Caco-2 (cell line): ENCODE measurements at regions of chr18 and their contacts with region 1.

Region 1: GRCh38 chr18:7645756-7646155 is 78.6 kb downstream of the PTPRM start:
- DNase-seq: no peak
- H3K4me3 ChIP-seq: no peak overlapping the region
- H3K4me3 Mint-ChIP-seq: peak overlapping the region; percentile 58
- H3K27ac Mint-ChIP-seq: peak overlapping the region; percentile 72
- H3K4me1 ChIP-seq: peaks cover 79% of the 10 kb centered on the region
- H3K4me1 Mint-ChIP-seq: peaks cover 41% of the 10 kb centered on the region
- H3K27me3 ChIP-seq: no peaks in the 10 kb centered on the region
- H3K27me3 Mint-ChIP-seq: no peaks in the 10 kb centered on the region
- CTCF ChIP-seq: no peak

Region 2: GRCh38 chr18:7221424-7222155 is 424.2 kb before region 1 on chr18:
- CTCF ChIA-PET with region 1: no interaction called
- POLR2A ChIA-PET with region 1: no interaction called
- intact Hi-C with region 1: no loop called
- DNase-seq: peak; percentile 75 to 77
- H3K4me3 ChIP-seq: no peak overlapping the region
- H3K4me3 Mint-ChIP-seq: no peak overlapping the region
- H3K27ac Mint-ChIP-seq: no peak overlapping the region
- H3K4me1 ChIP-seq: no peaks in the 10 kb centered on the region
- H3K4me1 Mint-ChIP-seq: no peaks in the 10 kb centered on the region
- H3K27me3 ChIP-seq: no peaks in the 10 kb centered on the region
- H3K27me3 Mint-ChIP-seq: peaks cover 6% of the 10 kb centered on the region
- CTCF ChIP-seq: peak; percentile 65 to 84

Region 3: DNA sequence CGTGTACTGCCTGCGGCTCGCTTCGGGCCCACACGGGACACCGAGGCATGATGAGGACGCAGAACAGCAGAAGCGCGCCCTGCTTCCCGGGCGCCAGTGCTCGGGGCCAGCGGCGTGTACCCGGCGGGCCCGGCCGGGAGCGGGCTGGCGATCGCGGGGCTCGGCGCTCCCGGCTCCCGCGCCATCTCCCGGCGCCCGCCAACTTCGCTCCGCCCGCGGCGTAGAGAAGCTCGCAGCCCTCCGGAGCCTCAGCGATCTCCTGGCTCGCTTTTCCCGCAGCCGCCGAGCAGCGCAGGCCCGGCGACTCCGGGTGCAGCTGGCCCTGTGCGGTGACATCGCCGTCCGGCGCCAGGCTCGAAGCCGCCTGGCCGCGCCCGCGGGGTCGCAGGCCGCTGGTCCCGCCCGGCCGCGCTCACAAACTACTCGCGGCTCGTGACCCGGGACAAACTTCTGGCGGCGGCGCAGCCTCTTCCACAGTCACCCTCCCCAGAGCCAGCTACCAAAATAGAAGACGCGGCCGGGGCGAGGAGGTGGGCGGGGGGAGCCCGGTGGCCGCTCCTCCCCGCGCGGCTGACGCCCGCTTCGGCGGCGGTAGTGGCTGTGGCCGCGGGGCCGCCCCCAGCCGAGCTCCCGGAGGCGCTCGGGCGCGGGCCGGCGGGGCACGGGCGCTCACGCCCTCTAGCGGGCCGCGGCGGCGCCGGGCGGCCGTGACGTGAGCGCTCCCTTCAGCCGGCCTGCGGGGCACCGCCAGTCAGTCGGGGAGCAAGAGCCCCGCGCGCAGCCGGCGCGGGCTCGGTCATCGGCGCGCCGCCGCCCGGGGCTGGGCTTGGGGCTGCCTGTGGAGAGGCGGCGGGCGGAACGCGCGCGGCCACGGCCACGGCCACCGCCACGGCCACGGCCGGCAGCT is 78.9 kb before region 1 on chr18 and contains the start of gene PTPRM:
- CTCF ChIA-PET with region 1: interaction called, 3 read pairs
- POLR2A ChIA-PET with region 1: interaction called, 6 read pairs
- intact Hi-C with region 1: loop called (anchors 2 kb)
- DNase-seq: peak; percentile 72 to 89
- H3K4me3 ChIP-seq: peak within 1 kb of the TSS; percentile 93
- H3K4me3 Mint-ChIP-seq: peak within 1 kb of the TSS; percentile 83
- H3K27ac Mint-ChIP-seq: peak within 1 kb of the TSS; percentile 72
- H3K4me1 ChIP-seq: peaks cover 17% of the 10 kb centered on the region
- H3K4me1 Mint-ChIP-seq: peaks cover 16% of the 10 kb centered on the region
- H3K27me3 ChIP-seq: no peaks in the 10 kb centered on the region
- H3K27me3 Mint-ChIP-seq: no peaks in the 10 kb centered on the region
- CTCF ChIP-seq: peak in 1 of 2 experiments; percentile 9
- total RNA-seq, gene PTPRM: 100.0 and 112 TPM in 2 replicates

Region 4: GRCh38 chr18:7676253-7676873 is 30.6 kb after region 1 on chr18:
- CTCF ChIA-PET with region 1: no interaction called
- POLR2A ChIA-PET with region 1: no interaction called
- intact Hi-C with region 1: no loop called
- DNase-seq: no peak
- H3K4me3 ChIP-seq: no peak overlapping the region
- H3K4me3 Mint-ChIP-seq: no peak overlapping the region
- H3K27ac Mint-ChIP-seq: peak overlapping the region; percentile 23
- H3K4me1 ChIP-seq: 0 out of 2 replicates have a peak, but pooled peaks cover 9% of the 10 kb centered on the region
- H3K4me1 Mint-ChIP-seq: peaks cover 9% of the 10 kb centered on the region
- H3K27me3 ChIP-seq: no peaks in the 10 kb centered on the region
- H3K27me3 Mint-ChIP-seq: no peaks in the 10 kb centered on the region
- CTCF ChIP-seq: no peak

Region 5: GRCh38 chr18:7735194-7735593 is 89.4 kb after region 1 on chr18:
- CTCF ChIA-PET with region 1: interaction called, 4 read pairs
- POLR2A ChIA-PET with region 1: no interaction called
- intact Hi-C with region 1: loop called (anchors 1 kb)
- DNase-seq: peak in 1 of 2 experiments; percentile 33
- H3K4me3 ChIP-seq: no peak overlapping the region
- H3K4me3 Mint-ChIP-seq: peak overlapping the region; percentile 51
- H3K27ac Mint-ChIP-seq: peak overlapping the region; percentile 78
- H3K4me1 ChIP-seq: peaks cover 76% of the 10 kb centered on the region
- H3K4me1 Mint-ChIP-seq: peaks cover 40% of the 10 kb centered on the region
- H3K27me3 ChIP-seq: no peaks in the 10 kb centered on the region
- H3K27me3 Mint-ChIP-seq: no peaks in the 10 kb centered on the region
- CTCF ChIP-seq: peak; percentile 49 to 55

Region 6: DNA sequence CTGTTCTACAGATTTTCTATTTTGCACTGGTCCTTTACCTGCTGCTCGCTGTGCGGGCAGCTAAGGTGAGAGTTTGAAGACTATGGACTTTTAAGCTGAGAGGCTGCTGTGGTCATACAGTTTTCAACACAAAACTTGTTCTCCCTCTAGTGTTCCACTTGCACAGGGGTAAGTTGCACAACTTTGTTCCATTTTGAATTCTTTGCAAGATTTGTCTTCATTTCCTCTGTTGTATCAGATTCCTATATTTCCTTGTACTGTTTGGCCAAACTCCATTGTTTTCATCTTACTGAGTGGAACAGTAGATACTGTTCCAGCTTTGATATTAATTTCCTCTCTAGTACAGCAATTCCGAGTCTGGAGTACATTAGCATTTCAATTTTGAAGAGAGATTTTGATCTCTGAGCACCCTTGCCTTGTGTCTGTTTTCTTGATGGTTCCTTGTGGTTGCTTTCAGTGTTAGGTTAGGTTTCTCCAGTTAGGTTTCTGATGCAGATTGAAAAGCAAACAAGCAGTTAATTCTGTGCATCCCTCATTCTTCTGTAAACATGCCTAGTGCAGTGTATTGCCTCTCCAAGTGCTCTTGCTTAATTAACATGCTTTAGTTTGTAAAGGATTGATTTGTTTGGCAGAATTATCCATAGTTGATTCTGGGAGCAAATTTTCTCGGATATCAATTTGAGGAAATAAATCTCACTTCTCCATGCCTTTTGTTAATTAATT is 110.2 kb after region 1 on chr18:
- CTCF ChIA-PET with region 1: interaction called, 4 read pairs
- POLR2A ChIA-PET with region 1: interaction called, 5 read pairs
- intact Hi-C with region 1: loop called (anchors 1 kb)
- DNase-seq: peak in 1 of 2 experiments; percentile 48
- H3K4me3 ChIP-seq: peak overlapping the region; percentile 11
- H3K4me3 Mint-ChIP-seq: peak overlapping the region; percentile 84
- H3K27ac Mint-ChIP-seq: peak overlapping the region; percentile 93
- H3K4me1 ChIP-seq: peaks cover 96% of the 10 kb centered on the region
- H3K4me1 Mint-ChIP-seq: peaks cover 74% of the 10 kb centered on the region
- H3K27me3 ChIP-seq: no peaks in the 10 kb centered on the region
- H3K27me3 Mint-ChIP-seq: no peaks in the 10 kb centered on the region
- CTCF ChIP-seq: peak in 1 of 2 experiments; percentile 56

Region 7: GRCh38 chr18:8011905-8012304 is 366.1 kb after region 1 on chr18:
- CTCF ChIA-PET with region 1: no interaction called
- POLR2A ChIA-PET with region 1: no interaction called
- intact Hi-C with region 1: no loop called
- DNase-seq: peak in 1 of 2 experiments; percentile 17
- H3K4me3 ChIP-seq: no peak overlapping the region
- H3K4me3 Mint-ChIP-seq: no peak overlapping the region
- H3K27ac Mint-ChIP-seq: no peak overlapping the region
- H3K4me1 ChIP-seq: peaks cover under 1% of the 10 kb centered on the region; the same call in 1 of the 2 replicates
- H3K4me1 Mint-ChIP-seq: no peaks in the 10 kb centered on the region
- H3K27me3 ChIP-seq: no peaks in the 10 kb centered on the region
- H3K27me3 Mint-ChIP-seq: no peaks in the 10 kb centered on the region
- CTCF ChIP-seq: peak in 1 of 2 experiments; percentile 8

Region 8: DNA sequence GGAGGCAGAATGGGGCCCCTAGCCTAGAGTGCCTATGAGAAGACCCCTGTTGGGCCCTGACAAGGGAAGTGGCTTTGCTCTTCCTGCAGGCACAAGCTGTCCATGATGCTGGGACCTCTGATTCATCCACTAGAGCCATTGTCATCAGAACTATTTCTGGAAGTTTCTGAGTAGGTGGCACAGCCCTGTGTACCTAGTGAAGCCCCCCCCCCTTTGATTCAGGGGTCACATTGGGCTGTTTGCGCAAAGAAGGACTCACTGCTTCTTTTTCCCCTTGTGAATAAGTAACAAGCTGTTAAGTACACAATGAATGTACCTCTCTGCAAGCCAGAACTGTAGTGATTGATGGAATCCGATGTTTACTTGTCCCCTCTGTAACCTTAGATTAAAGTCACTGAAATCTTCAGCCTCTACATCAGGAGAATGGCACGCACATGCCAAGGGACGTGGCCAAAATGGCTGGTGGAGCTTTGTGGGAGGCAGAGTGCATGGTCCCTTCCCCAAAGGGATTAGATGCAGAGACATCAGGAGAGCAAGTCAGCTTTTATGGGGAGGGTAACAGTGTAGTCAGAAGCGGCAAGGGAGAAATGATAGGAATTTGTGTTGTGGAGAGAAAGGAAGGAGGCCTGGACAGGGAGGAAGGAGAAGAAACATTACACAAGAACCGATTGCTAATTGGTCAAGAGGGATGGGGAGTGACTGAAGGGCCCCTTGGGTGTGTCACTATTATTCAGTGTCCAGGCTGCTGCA is 695.9 kb after region 1 on chr18:
- CTCF ChIA-PET with region 1: no interaction called
- POLR2A ChIA-PET with region 1: no interaction called
- intact Hi-C with region 1: loop called (anchors 5 kb)
- DNase-seq: peak; percentile 88 to 91
- H3K4me3 ChIP-seq: no peak overlapping the region
- H3K4me3 Mint-ChIP-seq: peak overlapping the region; percentile 42
- H3K27ac Mint-ChIP-seq: peak overlapping the region; percentile 76
- H3K4me1 ChIP-seq: peaks cover 72% of the 10 kb centered on the region
- H3K4me1 Mint-ChIP-seq: peaks cover 30% of the 10 kb centered on the region
- H3K27me3 ChIP-seq: no peaks in the 10 kb centered on the region
- H3K27me3 Mint-ChIP-seq: no peaks in the 10 kb centered on the region
- CTCF ChIP-seq: no peak